Transverse colon (tissue), 4 donors: ENCODE measurements at regions of chr15 and their contacts with region 1.

Region 1: DNA sequence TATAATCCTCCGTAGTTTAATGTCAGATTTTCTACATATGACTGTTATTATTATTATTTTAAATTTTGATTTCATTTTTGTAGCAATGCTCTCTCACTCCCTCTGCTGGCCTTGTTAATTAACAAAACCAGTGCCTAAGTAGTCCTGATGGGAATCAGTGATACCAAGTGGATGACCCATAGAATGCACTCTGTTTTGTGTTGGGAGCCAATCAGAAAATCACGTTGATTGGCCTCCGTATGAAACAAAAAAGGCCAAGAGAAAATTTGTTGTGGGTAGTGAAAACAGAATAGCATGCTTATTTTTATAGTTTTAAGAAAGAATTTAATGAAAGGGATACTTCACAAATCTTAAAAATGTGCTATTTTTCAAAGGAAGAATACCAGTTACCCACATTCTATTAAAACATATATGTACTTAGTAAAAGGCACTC is 34.4 kb upstream of the MEIS2 start:
- DNase-seq: no peak
- H3K4me3 ChIP-seq: no peak overlapping the region
- H3K27ac ChIP-seq: no peak overlapping the region
- H3K4me1 ChIP-seq: no peaks in the 10 kb centered on the region
- H3K27me3 ChIP-seq: peaks cover 6% of the 10 kb centered on the region
- CTCF ChIP-seq: peak; percentile 57 to 79 (median 67)
- EP300 ChIP-seq: no peak
- POLR2A ChIP-seq: no peak

Region 2: GRCh38 chr15:36501063-36501678 is 633.5 kb before region 1 on chr15:
- in situ Hi-C with region 1: loop called in 1 of 4 experiments (anchors 25 kb)
- intact Hi-C with region 1: no loop called
- DNase-seq: no peak
- H3K4me3 ChIP-seq: no peak overlapping the region
- H3K27ac ChIP-seq: no peak overlapping the region
- H3K4me1 ChIP-seq: no peaks in the 10 kb centered on the region
- H3K27me3 ChIP-seq: no peaks in the 10 kb centered on the region
- CTCF ChIP-seq: peak; percentile 54 to 64 (median 60)
- EP300 ChIP-seq: no peak
- POLR2A ChIP-seq: no peak

Region 3: DNA sequence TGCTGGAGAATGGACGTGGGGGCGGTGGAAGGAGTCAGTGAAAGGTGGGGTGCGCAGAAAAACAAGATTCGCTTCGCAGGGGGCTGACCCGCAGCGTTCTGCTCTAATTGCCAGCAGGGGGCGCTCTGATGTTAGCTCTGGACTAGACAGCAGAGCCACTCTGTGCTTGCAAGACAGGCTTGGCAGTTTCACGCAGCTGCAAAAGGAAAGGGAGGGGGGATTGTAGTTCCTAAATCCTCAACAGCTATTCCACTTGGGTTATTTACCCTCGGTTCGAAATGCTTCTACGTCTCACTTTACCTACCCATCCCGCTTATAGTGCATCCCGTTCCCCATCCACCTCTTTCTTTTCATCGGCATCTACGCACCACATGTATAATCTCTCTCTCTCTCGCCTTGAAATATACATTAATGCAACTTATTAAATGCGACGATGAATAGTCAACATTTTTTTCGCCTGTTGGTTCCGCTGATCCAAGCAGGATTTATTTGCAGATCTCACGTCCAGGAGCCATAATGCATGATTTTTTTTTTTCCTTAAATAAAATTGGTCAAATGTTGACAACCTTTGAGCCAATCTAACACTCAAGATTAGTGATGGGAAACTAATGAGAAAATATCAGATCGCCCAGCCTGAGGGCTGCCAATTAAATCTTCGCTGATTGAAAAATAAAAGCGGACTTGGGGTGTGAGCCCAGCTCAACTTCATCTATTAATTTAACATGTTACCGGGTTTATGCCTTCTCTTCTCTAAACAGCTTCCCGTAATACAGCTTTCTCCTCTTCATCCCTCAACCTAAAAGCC is 250.8 kb before region 1 on chr15:
- in situ Hi-C with region 1: no loop called
- intact Hi-C with region 1: loop called (anchors 1 kb)
- DNase-seq: peak; percentile 82
- H3K4me3 ChIP-seq: peak overlapping the region in 1 of 4 donors; percentile 26
- H3K27ac ChIP-seq: peak overlapping the region in 3 of 4 donors; percentile 15 to 83 (median 76)
- H3K4me1 ChIP-seq: peaks cover 0 to 16% (median 2%) of the 10 kb centered on the region in 4 donors
- H3K27me3 ChIP-seq: peaks cover 100% of the 10 kb centered on the region
- CTCF ChIP-seq: peak; percentile 75 to 89 (median 82)
- EP300 ChIP-seq: no peak
- POLR2A ChIP-seq: no peak